ENCODE measurements at regions of chr11 and their contacts with region 1.

Region 1: DNA sequence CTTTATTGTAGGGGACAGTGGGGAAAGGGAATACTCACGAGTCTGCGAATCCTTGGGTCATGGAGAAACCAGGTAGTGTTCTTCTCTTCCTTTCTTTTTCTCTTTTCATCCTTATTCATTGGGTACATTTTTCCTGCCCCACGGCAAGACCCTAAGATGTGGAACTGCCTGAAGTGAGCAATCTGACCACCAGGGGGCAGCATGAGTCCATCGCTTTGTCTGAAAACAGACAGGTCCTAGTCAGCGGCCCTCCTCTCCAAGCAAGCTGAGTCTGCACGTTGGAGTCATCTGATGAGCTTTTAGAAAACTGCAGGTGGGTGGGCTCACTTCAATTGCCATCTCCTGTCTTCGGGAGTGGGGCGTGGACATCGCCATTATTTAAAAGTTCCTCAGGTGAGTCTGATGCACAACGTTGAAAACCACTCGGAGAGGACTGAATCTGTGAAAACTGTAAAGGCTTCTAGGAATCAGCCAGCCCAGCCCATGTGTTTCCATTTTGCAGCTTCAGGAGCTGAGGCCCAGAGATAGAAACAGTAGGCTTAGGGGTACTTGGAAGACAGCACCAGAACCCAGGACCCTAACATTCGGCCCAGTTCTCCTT is 34.0 kb upstream of the FBXO3 start:
- DNase-seq: peak; percentile 87
- ATAC-seq: peak; percentile 94
- H3K4me3 Mint-ChIP-seq: no peak overlapping the region
- H3K27ac Mint-ChIP-seq: no peak overlapping the region
- H3K4me1 Mint-ChIP-seq: no peaks in the 10 kb centered on the region
- H3K27me3 Mint-ChIP-seq: peaks cover 21% of the 10 kb centered on the region

Region 2: DNA sequence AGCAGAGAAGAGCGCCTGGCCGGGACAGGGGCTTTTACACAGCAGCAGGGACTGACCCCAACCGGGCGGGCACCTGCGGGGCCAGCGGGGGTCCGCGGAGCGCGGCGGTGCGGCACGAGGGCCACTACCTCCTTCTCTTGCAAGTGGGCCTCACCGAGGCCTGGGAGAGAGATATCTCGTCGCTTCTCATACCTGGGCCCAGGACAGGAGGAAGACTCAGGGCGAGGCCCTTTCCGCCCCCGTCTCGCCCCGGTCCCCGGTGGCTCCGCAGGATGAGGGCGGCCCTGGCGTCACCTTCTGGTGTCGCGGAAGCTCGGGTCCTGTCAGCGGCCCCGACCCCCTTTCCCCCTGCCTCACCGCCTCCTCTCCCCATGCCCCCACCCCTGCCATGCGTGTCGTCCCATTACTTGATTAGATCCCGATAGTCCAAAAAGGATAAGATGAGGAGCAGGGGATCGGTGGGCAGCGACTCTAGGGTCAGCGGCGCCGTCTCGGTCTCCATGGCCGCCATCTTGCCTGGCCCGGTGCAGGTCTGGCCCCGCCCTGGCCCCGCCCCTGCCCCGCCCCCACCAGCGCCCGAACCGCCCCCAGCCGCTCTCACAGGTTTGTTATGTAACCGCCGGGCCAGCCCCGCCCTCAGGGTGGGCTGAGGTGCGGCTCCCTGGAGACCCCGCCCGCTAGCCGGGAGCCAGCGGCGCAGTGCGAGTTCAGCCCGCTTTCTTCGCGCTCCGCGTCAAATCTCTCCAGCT is 34.2 kb before region 1 on chr11 and contains the start of gene FBXO3:
- CTCF ChIA-PET with region 1: no interaction called
- POLR2A ChIA-PET with region 1: no interaction called
- DNase-seq: peak; percentile 86
- ATAC-seq: peak; percentile 87
- H3K4me3 Mint-ChIP-seq: peak within 1 kb of the TSS; percentile 91
- H3K27ac Mint-ChIP-seq: peak within 1 kb of the TSS; percentile 94
- H3K4me1 Mint-ChIP-seq: peaks cover 23% of the 10 kb centered on the region
- H3K27me3 Mint-ChIP-seq: peaks cover 25% of the 10 kb centered on the region
- total RNA-seq, gene FBXO3: 15.1 to 16.8 TPM

Region 3: DNA sequence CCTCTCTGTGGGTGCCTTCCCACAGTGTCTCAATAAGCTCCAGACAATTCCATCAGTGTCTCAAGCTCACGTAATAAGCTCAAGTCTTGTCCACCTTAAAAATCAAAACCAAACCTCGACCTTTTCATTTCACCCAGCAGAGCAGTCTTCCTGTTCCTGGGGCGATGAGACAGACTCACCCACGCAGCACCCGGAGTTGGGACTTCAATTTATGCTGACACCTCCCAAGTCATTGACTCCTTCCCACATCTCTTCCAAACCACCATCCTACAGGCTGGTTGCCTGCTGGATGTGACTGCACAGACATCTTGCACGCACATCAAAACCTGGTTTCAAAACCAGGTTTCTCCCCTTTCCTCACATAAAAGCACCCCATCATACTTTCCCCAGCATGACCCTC is 10.9 kb after region 1 on chr11:
- CTCF ChIA-PET with region 1: interaction called, 12 read pairs
- POLR2A ChIA-PET with region 1: no interaction called
- DNase-seq: no peak
- ATAC-seq: no peak
- H3K4me3 Mint-ChIP-seq: no peak overlapping the region
- H3K27ac Mint-ChIP-seq: no peak overlapping the region
- H3K4me1 Mint-ChIP-seq: no peaks in the 10 kb centered on the region
- H3K27me3 Mint-ChIP-seq: peaks cover 34% of the 10 kb centered on the region

Region 4: GRCh38 chr11:33829433-33830141 is 21.3 kb after region 1 on chr11:
- CTCF ChIA-PET with region 1: interaction called, 37 read pairs
- POLR2A ChIA-PET with region 1: no interaction called
- DNase-seq: peak; percentile 70
- ATAC-seq: peak; percentile 76
- H3K4me3 Mint-ChIP-seq: peak overlapping the region; percentile 52
- H3K27ac Mint-ChIP-seq: no peak overlapping the region
- H3K4me1 Mint-ChIP-seq: peaks cover 3% of the 10 kb centered on the region
- H3K27me3 Mint-ChIP-seq: peaks cover 49% of the 10 kb centered on the region

Region 5: DNA sequence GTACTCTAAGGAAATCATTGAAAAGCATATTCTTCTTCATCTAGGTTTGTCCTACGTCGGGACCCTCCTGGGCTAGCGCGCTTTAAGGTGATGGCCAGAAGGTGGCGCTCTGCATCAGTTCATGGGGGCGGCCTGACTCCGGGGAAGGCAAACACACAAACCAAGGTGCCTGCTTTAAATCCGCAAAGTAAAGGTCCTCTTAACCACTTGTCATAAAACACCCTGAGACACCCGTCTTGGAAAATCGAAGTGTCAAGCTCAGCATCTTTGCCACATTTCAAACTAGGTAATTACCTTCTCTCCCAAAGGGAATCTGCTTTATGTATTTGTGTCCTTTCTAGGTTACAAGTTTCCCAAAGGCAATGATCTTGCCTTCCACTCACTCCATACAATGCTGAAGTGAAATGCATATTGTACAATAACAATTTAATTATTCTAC is 49.6 kb after region 1 on chr11:
- CTCF ChIA-PET with region 1: interaction called, 11 read pairs
- POLR2A ChIA-PET with region 1: no interaction called
- DNase-seq: peak; percentile 82
- ATAC-seq: peak; percentile 82
- H3K4me3 Mint-ChIP-seq: no peak overlapping the region
- H3K27ac Mint-ChIP-seq: no peak overlapping the region
- H3K4me1 Mint-ChIP-seq: no peaks in the 10 kb centered on the region
- H3K27me3 Mint-ChIP-seq: peaks cover 56% of the 10 kb centered on the region

Region 6: DNA sequence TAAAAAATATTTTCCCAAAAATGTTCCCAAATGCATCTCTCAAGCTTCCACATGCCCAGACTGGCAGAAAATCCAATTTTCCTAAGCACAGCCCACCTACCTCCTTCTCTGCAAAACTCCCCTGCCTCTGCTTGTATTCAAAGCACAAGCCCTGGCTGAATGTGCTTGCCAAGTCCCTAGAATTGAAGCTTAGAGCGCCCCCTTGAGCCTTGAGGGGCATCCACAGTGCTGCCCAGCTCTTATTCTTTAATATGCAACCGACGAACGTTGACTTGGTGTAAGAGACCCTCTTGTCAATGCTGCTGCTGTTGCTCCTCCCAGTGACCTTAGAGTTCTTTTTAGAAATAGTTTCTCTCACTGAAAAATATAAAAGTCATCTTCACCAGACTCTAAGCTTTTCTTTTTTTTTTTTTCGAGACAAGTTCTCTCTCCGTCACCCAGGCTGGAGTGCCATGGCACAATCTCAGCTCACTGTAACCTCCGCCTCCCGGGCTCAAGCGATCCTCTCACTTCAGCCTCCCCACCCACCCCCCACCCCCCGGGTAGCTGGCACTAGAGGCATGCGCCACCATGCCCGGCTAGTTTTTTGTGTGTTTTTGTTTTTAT is 179.8 kb after region 1 on chr11:
- CTCF ChIA-PET with region 1: interaction called, 10 read pairs
- POLR2A ChIA-PET with region 1: no interaction called
- DNase-seq: peak; percentile 87
- ATAC-seq: peak; percentile 90
- H3K4me3 Mint-ChIP-seq: no peak overlapping the region
- H3K27ac Mint-ChIP-seq: no peak overlapping the region
- H3K4me1 Mint-ChIP-seq: peaks cover 13% of the 10 kb centered on the region
- H3K27me3 Mint-ChIP-seq: peaks cover 3% of the 10 kb centered on the region

Region 7: GRCh38 chr11:34288492-34288891 is 480.2 kb after region 1 on chr11:
- CTCF ChIA-PET with region 1: no interaction called
- POLR2A ChIA-PET with region 1: no interaction called
- DNase-seq: no peak
- ATAC-seq: no peak
- H3K4me3 Mint-ChIP-seq: no peak overlapping the region
- H3K27ac Mint-ChIP-seq: no peak overlapping the region
- H3K4me1 Mint-ChIP-seq: no peaks in the 10 kb centered on the region
- H3K27me3 Mint-ChIP-seq: peaks cover 6% of the 10 kb centered on the region